CD4-positive, alpha-beta T cell (primary cell): ENCODE measurements at regions of chr1 and their contacts with region 1.

Region 1: GRCh38 chr1:26233903-26234643 is at the start of gene CEP85:
- DNase-seq: peak; percentile 97 to 100 (median 99)
- ATAC-seq: peak; percentile 89
- H3K4me3 ChIP-seq: peak within 1 kb of the TSS; percentile 77
- H3K4me3 Mint-ChIP-seq: peak within 1 kb of the TSS; percentile 98
- H3K27ac ChIP-seq: peak within 1 kb of the TSS; percentile 83 to 88
- H3K27ac Mint-ChIP-seq: peak within 1 kb of the TSS; percentile 95
- H3K4me1 ChIP-seq: peaks cover 21% of the 10 kb centered on the region
- H3K4me1 Mint-ChIP-seq: peaks cover 39% of the 10 kb centered on the region
- H3K27me3 ChIP-seq: no peaks in the 10 kb centered on the region
- H3K27me3 Mint-ChIP-seq: no peaks in the 10 kb centered on the region
- CTCF ChIP-seq: peak; percentile 85
- total RNA-seq, gene CEP85: 7.6 to 8.4 TPM

Region 2: DNA sequence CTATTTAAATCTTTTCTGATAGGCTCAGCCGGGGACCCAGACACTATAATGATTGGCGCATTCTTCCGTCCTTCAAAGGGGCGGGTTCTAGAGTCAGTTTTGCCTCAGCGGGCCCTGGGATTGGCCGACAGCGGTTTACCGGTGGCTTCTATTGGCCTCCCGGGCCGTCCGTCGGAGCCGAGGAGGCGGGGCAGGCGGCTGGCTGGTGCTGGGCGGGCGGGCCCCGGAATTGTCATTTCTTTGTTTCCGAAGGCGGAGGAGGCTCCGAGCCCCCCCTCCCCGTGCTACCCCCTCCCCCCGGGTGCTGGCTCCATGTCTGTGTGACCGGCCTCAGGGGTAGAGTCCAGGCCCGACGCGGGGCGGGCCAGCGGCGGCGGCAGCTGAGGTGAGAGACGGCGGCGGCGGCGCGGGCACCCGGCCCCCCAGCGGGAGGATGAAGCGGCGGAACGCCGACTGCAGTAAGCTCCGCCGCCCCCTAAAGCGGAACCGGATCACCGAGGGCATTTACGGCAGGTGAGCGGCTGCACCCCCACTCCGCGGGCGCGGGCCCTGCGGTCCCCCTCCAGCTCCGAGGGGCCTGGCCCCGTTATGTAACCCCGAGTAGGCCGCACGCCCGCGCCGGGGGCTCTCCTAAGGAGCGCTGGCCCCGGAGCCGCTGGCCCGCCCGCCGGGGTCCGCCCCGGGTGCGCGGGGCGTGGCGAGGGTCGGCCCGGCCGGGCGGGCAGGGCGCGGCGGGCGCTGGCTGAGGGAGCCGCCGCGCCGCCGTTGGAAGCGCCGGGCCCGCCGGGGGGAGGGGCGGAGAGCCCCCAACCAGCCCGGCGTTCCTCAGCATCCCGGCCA is 803.2 kb before region 1 on chr1 and contains the start of gene MACO1:
- CTCF ChIA-PET with region 1: no interaction called
- POLR2A ChIA-PET with region 1: no interaction called
- intact Hi-C with region 1: no loop called
- DNase-seq: peak; percentile 93 to 98 (median 96)
- ATAC-seq: peak; percentile 82
- H3K4me3 ChIP-seq: peak within 1 kb of the TSS; percentile 83
- H3K4me3 Mint-ChIP-seq: peak within 1 kb of the TSS; percentile 92
- H3K27ac ChIP-seq: peak within 1 kb of the TSS; percentile 96 to 97
- H3K27ac Mint-ChIP-seq: peak within 1 kb of the TSS; percentile 100
- H3K4me1 ChIP-seq: peaks cover 9% of the 10 kb centered on the region
- H3K4me1 Mint-ChIP-seq: peaks cover 58% of the 10 kb centered on the region
- H3K27me3 ChIP-seq: no peaks in the 10 kb centered on the region
- H3K27me3 Mint-ChIP-seq: no peaks in the 10 kb centered on the region
- CTCF ChIP-seq: no peak
- total RNA-seq, gene MACO1: 24.1 to 24.9 TPM

Region 3: DNA sequence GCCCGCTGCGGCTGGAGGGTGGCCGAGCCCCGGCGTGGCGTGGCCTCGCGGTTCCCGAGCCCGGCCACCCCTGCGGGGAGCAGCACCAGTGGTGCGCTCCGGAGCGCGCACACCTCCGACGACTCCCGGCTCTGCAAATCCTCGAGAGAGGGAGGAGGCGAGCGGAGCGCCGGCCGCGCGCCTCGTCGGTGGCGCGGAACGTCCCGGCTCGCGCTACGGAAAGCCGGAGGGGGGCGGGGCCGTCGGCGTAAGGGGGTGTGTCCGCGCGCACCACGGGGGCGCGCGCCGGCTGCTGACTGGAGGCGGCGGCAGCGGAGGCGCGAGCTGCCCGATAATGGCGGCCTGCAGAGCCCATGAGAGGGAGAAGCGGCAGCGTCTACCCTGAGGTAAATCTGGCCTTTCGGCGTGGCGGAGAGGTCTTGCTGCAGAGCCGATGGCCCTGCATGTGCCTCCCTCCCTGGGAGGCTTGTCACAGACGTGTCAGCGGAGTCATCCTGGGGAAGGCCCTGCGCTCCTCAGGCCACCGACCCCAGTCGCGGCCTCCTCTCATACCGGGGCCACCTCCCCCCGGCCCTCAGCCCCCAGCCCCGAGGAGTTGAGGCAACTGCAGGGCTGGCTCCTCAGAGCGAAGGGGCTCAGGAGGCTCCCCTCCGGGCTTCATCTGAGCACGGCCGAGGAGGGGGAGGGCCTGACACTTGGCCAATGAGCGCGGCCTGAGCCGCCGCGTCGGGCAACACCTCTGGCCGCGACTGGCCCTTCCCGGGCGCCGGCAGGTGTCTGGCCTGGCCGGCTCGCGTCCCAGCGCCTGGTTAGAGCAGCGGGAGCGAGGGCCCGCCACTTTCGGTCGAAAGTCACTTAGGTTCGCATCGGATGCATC is 122.3 kb before region 1 on chr1 and contains the start of gene PDIK1L:
- CTCF ChIA-PET with region 1: interaction called, 3 read pairs
- POLR2A ChIA-PET with region 1: interaction called, 3 read pairs
- intact Hi-C with region 1: loop called (anchors 5 kb)
- DNase-seq: peak; percentile 91 to 99 (median 95)
- ATAC-seq: peak; percentile 86
- H3K4me3 ChIP-seq: peak within 1 kb of the TSS; percentile 99
- H3K4me3 Mint-ChIP-seq: peak within 1 kb of the TSS; percentile 96
- H3K27ac ChIP-seq: peak within 1 kb of the TSS; percentile 34 to 73
- H3K27ac Mint-ChIP-seq: peak within 1 kb of the TSS; percentile 92
- H3K4me1 ChIP-seq: peaks cover 24% of the 10 kb centered on the region
- H3K4me1 Mint-ChIP-seq: peaks cover 38% of the 10 kb centered on the region
- H3K27me3 ChIP-seq: no peaks in the 10 kb centered on the region
- H3K27me3 Mint-ChIP-seq: no peaks in the 10 kb centered on the region
- CTCF ChIP-seq: no peak
- total RNA-seq, gene PDIK1L: 9.5 to 9.9 TPM

Region 4: DNA sequence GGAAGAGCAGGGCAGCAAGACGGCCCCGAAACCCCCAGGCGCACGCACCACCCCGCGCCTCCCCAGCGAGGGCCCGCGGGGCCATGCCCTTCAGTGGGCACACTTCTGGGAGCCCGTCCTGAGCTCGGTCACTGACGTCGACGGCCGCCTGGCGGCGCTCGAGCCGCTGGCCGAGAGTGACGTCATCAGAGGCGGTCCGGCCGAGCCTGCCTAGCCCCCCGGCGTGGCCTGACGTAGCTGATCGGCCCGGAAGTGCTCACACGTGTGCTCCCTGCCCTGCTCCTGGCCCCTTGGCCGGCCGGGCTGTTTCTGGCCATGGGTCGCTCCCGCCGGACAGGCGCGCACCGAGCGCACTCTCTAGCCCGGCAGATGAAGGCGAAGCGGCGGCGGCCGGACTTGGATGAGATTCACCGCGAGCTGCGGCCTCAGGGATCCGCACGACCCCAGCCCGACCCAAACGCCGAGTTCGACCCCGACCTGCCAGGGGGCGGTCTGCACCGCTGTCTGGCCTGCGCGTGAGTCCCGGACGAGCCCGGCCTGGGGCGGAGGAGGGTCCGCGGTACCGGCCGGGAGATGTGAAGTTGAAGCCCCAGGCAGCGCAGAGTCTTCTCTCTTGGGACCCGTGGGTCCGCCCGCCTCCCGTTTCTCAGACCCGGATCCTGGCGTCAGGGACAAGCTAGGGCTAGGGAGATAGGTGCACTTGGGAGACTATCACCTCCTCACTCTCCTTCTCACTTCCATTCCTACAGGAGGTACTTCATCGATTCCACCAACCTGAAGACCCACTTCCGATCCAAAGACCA is 64.2 kb before region 1 on chr1 and contains the start of gene ZNF593:
- CTCF ChIA-PET with region 1: interaction called, 50 read pairs
- POLR2A ChIA-PET with region 1: interaction called, 36 read pairs
- intact Hi-C with region 1: loop called (anchors 1 to 2 kb)
- DNase-seq: peak; percentile 61 to 91 (median 77)
- ATAC-seq: peak; percentile 86
- H3K4me3 ChIP-seq: peak within 1 kb of the TSS; percentile 85
- H3K4me3 Mint-ChIP-seq: peak within 1 kb of the TSS; percentile 90
- H3K27ac ChIP-seq: peak within 1 kb of the TSS; percentile 58 to 71
- H3K27ac Mint-ChIP-seq: peak within 1 kb of the TSS; percentile 61
- H3K4me1 ChIP-seq: peaks cover 26% of the 10 kb centered on the region
- H3K4me1 Mint-ChIP-seq: peaks cover 12% of the 10 kb centered on the region
- H3K27me3 ChIP-seq: no peaks in the 10 kb centered on the region
- H3K27me3 Mint-ChIP-seq: no peaks in the 10 kb centered on the region
- CTCF ChIP-seq: peak; percentile 90
- total RNA-seq, gene ZNF593: 5.0 to 6.6 TPM

Region 5: GRCh38 chr1:26203642-26204318 is 30.3 kb before region 1 on chr1:
- CTCF ChIA-PET with region 1: interaction called, 17 read pairs
- POLR2A ChIA-PET with region 1: interaction called, 21 read pairs
- intact Hi-C with region 1: no loop called
- DNase-seq: no peak
- ATAC-seq: no peak
- H3K4me3 ChIP-seq: no peak overlapping the region
- H3K4me3 Mint-ChIP-seq: no peak overlapping the region
- H3K27ac ChIP-seq: no peak overlapping the region
- H3K27ac Mint-ChIP-seq: no peak overlapping the region
- H3K4me1 ChIP-seq: peaks cover 34% of the 10 kb centered on the region
- H3K4me1 Mint-ChIP-seq: peaks cover 23% of the 10 kb centered on the region
- H3K27me3 ChIP-seq: no peaks in the 10 kb centered on the region
- H3K27me3 Mint-ChIP-seq: no peaks in the 10 kb centered on the region
- CTCF ChIP-seq: no peak

Region 6: DNA sequence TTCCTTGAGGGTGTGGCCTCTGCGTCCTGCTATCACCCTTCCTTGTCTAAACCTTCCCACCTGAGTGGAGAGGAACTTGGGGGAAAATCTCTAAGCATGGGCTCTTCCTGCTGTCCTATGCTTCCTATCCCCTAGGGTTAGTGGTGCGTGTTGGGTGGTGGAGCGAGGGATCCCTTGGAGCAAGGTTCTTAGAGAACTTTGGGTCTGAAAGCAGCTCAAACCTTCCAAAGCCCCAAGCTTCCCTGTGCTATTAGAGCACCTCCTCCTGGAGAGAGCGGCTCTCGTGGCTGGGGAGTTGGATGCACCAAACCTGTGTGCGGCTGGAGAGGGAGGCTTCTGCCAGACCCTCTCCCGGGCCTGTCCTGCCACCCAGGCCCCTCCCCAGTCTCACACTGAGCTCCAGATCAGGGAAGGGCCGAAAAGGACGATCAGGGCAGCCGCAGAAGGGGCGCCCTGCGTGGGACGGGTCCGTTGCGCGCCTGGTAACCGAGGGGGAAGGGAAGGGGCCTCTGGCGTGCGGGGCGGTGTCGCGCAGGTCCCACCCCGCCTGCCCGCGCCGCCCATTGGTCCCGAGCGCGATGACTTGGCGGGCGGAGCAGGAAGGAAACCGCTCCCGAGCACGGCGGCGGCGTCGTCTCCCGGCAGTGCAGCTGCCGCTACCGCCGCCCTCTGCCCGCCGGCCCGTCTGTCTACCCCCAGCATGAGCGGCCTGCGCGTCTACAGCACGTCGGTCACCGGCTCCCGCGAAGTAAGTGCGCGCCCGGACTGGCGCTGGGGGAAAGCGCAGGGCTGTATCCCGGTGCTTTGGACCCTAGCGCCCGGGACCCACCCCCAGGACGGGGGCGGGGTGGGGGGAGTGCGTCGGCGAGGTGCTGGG is 45.6 kb after region 1 on chr1 and contains the start of gene SH3BGRL3:
- CTCF ChIA-PET with region 1: interaction called, 20 read pairs
- POLR2A ChIA-PET with region 1: interaction called, 7 read pairs
- intact Hi-C with region 1: loop called in 1 of 2 experiments (anchors 5 kb)
- DNase-seq: peak; percentile 67 to 93 (median 86)
- ATAC-seq: peak; percentile 63
- H3K4me3 ChIP-seq: peak within 1 kb of the TSS; percentile 72
- H3K4me3 Mint-ChIP-seq: peak within 1 kb of the TSS; percentile 92
- H3K27ac ChIP-seq: peak within 1 kb of the TSS; percentile 84 to 91
- H3K27ac Mint-ChIP-seq: peak within 1 kb of the TSS; percentile 95
- H3K4me1 ChIP-seq: peaks cover 90% of the 10 kb centered on the region
- H3K4me1 Mint-ChIP-seq: peaks cover 83% of the 10 kb centered on the region
- H3K27me3 ChIP-seq: no peaks in the 10 kb centered on the region
- H3K27me3 Mint-ChIP-seq: no peaks in the 10 kb centered on the region
- CTCF ChIP-seq: no peak
- total RNA-seq, gene SH3BGRL3: 178 to 193 TPM

Region 7: GRCh38 chr1:26391450-26391849 is 157.4 kb after region 1 on chr1:
- CTCF ChIA-PET with region 1: no interaction called
- POLR2A ChIA-PET with region 1: no interaction called
- intact Hi-C with region 1: no loop called
- DNase-seq: peak in 12 of 14 experiments; percentile 21 to 80 (median 36)
- ATAC-seq: peak; percentile 69
- H3K4me3 ChIP-seq: no peak overlapping the region
- H3K4me3 Mint-ChIP-seq: no peak overlapping the region
- H3K27ac ChIP-seq: no peak overlapping the region
- H3K27ac Mint-ChIP-seq: no peak overlapping the region
- H3K4me1 ChIP-seq: peaks cover 41% of the 10 kb centered on the region
- H3K4me1 Mint-ChIP-seq: peaks cover 20% of the 10 kb centered on the region
- H3K27me3 ChIP-seq: no peaks in the 10 kb centered on the region
- H3K27me3 Mint-ChIP-seq: no peaks in the 10 kb centered on the region
- CTCF ChIP-seq: peak; percentile 68

Region 8: DNA sequence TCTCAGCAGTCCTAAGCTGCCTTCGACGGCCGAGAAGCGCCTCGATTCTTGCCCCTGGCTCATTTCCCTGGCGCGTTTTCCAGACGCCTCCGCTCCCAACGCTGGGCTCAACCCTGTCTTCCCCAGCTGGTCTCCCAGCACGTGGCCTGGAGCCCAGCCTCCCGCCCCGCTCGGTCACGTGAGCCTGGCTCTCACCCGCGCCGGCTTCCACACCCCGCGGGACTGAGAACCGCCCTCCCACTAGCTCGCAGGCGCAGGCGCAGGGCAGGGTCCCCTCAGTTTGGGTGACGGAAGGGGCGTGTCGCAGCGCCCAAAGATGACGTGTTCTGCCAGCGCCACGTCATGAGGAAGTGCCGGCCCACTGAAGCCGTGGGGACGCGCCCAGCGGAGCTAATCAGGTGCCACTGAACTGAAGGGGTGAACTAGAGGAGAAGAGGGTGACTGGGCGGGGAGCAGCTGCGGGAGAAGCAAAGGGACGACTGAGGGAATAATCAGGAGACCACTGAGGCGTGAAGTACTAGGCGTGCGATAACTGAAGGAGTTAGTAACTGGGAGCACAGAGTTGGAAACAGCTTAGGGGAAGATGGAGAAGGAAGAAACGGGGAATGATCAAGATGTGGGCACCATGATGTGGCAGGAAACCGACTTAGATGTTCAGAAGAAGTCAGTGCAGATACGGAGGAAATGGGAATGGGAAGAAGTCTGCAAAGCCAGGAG is 198.1 kb after region 1 on chr1 and contains the start of gene DHDDS:
- CTCF ChIA-PET with region 1: interaction called, 14 read pairs
- POLR2A ChIA-PET with region 1: interaction called, 12 read pairs
- intact Hi-C with region 1: no loop called
- DNase-seq: peak; percentile 95 to 99 (median 98)
- ATAC-seq: peak; percentile 94
- H3K4me3 ChIP-seq: peak within 1 kb of the TSS; percentile 81
- H3K4me3 Mint-ChIP-seq: peak within 1 kb of the TSS; percentile 92
- H3K27ac ChIP-seq: peak within 1 kb of the TSS; percentile 36 to 77
- H3K27ac Mint-ChIP-seq: peak within 1 kb of the TSS; percentile 88
- H3K4me1 ChIP-seq: peaks cover 26% of the 10 kb centered on the region
- H3K4me1 Mint-ChIP-seq: peaks cover 23% of the 10 kb centered on the region
- H3K27me3 ChIP-seq: no peaks in the 10 kb centered on the region
- H3K27me3 Mint-ChIP-seq: no peaks in the 10 kb centered on the region
- CTCF ChIP-seq: no peak
- total RNA-seq, gene DHDDS: 26.3 to 26.8 TPM